ENCODE measurements at regions of chr13 and their contacts with region 1.

Region 1: DNA sequence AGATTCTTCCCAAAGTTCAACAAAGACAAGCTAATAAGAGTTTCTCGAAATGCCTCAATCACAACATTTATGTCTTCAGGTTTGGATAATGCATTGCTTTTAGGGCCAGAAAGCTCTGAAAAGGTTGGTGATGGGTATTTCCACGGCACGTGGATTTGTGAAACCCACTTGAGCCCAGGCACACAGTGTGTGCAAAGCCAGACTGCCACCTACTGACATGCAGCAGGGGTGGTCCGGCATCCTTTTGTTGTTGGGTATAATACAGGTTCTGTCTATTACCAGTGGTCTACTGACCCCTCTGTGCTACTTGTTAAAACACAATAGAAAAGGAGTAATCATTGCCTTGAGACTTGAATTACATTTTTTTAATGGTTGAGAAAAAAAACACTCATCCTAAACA is 225.6 kb downstream of the RAP2A start:
- DNase-seq: peak; percentile 31
- H3K4me3 ChIP-seq: no peak overlapping the region
- H3K27ac ChIP-seq: no peak overlapping the region
- H3K4me1 ChIP-seq: peaks cover 6% of the 10 kb centered on the region
- H3K27me3 ChIP-seq: peaks cover 73% of the 10 kb centered on the region
- CTCF ChIP-seq: peak; percentile 58

Region 2: DNA sequence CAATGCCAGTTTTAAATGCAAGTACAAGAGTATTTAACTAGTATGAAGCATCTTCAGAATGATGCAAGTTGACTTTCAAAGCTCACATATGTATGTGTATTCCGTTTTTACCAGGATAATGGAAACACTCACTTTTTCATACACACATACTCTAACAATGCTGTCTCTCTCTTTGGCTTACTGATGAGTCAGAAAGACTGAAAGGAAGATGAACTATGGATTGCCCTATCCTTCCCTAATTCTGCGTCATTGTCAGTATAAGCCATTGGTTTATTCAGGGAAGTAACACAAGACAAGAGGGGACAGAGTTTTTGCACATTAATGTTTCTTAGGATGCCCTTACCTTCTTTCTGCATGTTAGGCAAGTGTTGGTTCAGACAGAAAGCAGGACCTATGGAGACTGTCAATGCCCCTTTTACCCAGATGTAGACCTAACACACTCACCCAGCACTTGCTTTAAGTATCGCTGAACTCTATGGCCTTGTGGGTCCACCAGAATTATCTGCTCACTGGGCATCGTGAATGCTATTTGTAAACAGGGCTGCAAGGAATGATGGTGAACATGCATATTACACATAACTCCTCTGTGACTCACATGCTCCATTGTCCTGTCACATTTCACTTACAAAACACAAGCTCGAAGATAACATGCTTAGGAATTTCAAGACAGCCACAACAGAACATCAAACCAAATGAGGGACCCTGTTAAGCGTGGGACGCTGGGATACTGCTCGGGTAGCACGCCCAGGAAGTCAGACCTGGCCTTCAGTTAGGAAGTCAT is 655.3 kb before region 1 on chr13:
- CTCF ChIA-PET with region 1: no interaction called
- POLR2A ChIA-PET with region 1: no interaction called
- intact Hi-C with region 1: no loop called
- DNase-seq: no peak
- H3K4me3 ChIP-seq: no peak overlapping the region
- H3K27ac ChIP-seq: no peak overlapping the region
- H3K4me1 ChIP-seq: no peaks in the 10 kb centered on the region
- H3K27me3 ChIP-seq: peaks cover 43% of the 10 kb centered on the region
- CTCF ChIP-seq: no peak

Region 3: GRCh38 chr13:97438856-97439595 is 220.6 kb before region 1 on chr13:
- CTCF ChIA-PET with region 1: no interaction called
- POLR2A ChIA-PET with region 1: no interaction called
- intact Hi-C with region 1: loop called (anchors 2 kb)
- DNase-seq: peak; percentile 82
- H3K4me3 ChIP-seq: peak overlapping the region; percentile 8
- H3K27ac ChIP-seq: peak overlapping the region; percentile 78
- H3K4me1 ChIP-seq: peaks cover 69% of the 10 kb centered on the region
- H3K27me3 ChIP-seq: no peaks in the 10 kb centered on the region
- CTCF ChIP-seq: no peak